ENCODE measurements at regions of chr1 and their contacts with region 1.

Region 1: DNA sequence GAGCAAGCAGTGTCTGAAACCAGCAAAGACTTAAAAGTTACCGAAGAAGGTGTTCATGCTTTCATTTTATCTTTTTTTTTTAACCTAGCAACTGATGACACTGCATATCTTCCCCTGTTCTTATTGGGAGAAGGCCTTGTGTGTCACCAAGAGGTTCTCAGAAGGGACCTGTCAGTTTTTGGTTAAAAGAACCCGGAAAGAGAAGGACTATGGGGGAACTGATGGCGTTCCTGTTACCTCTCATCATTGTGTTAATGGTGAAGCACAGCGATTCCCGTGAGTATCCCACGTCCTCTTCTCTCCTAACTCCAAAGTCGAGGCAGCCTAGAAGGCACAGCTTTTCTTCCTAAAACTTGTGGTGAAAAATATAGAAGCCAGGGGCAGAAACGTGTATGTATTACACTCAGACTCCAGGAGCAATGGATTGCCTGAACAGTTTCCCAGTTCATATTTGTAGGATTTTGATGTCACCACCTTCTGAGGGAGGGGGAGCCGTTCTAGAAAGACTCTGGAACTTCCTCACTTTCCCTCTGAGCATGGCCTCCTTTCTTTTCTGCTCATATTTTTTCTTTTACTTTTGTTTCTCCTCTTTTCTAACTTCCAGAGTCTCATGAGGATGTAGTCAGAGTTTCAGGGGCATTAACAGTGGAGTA is at the start of gene MR1:
- DNase-seq: no peak
- H3K4me3 ChIP-seq: peak within 1 kb of the TSS; percentile 41
- CTCF ChIP-seq: no peak

Region 2: GRCh38 chr1:181021811-181022434 is 12.0 kb before region 1 on chr1:
- CTCF ChIA-PET with region 1: interaction called, 9 read pairs
- POLR2A ChIA-PET with region 1: interaction called, 21 read pairs
- DNase-seq: no peak
- H3K4me3 ChIP-seq: peak overlapping the region; percentile 83
- CTCF ChIP-seq: no peak

Region 3: GRCh38 chr1:181044449-181044966 is 10.6 kb after region 1 on chr1:
- CTCF ChIA-PET with region 1: interaction called, 12 read pairs
- POLR2A ChIA-PET with region 1: interaction called, 3 read pairs
- DNase-seq: no peak
- H3K4me3 ChIP-seq: no peak overlapping the region
- CTCF ChIP-seq: no peak

Region 4: GRCh38 chr1:181062836-181063428 is 29.0 kb after region 1 on chr1:
- CTCF ChIA-PET with region 1: interaction called, 12 read pairs
- POLR2A ChIA-PET with region 1: no interaction called
- DNase-seq: peak; percentile 41
- H3K4me3 ChIP-seq: no peak overlapping the region
- CTCF ChIP-seq: no peak

Region 5: GRCh38 chr1:181088079-181089016 is 54.4 kb after region 1 on chr1 and contains the start of gene IER5:
- CTCF ChIA-PET with region 1: interaction called, 11 read pairs
- POLR2A ChIA-PET with region 1: interaction called, 8 read pairs
- DNase-seq: peak; percentile 72
- H3K4me3 ChIP-seq: peak within 1 kb of the TSS; percentile 90
- CTCF ChIP-seq: no peak

Region 6: DNA sequence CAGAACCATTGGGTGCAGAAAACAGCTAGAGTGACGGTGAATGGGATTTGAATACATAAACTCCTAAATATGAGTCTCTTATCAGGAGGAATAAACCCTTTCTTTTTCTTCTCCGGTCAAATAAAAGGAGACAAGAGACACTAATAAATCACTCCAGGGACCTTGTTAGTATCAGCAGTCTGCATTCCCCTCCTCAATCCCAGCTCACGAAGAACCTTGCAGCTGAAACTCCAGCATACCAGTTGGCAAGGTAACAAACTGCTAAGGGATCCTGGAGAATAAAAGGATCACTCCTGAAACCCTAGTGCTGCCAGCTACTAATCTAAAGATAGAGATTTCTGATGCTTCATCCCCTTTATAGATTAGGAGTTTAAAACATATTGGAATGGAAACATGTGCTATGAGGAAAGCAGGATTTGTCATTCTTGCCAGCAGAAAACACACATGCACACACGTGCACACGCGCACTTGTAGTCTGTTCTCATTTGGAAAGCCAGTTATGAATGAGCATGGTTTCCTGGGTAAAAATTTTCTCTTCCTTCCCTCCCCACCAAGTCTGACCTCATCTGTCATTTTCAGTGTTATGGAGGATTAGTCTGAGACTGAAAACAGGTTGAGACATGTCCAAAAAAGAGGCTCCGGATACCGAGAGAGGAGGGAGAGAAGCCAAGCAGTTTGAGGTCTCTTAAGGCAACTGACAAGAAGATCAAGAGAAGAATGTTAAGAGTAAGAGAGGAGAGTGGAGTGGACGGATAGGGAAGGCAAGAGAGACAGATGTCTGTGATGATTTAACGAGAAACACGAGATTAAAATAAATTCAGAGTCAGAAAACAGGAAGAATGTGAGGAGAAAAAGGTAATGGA is 65.5 kb after region 1 on chr1:
- CTCF ChIA-PET with region 1: interaction called, 16 read pairs
- POLR2A ChIA-PET with region 1: no interaction called
- DNase-seq: no peak
- H3K4me3 ChIP-seq: no peak overlapping the region
- CTCF ChIP-seq: no peak

Region 7: GRCh38 chr1:181166377-181167196 is 132.7 kb after region 1 on chr1:
- CTCF ChIA-PET with region 1: interaction called, 24 read pairs
- POLR2A ChIA-PET with region 1: no interaction called
- DNase-seq: peak; percentile 12
- H3K4me3 ChIP-seq: no peak overlapping the region
- CTCF ChIP-seq: peak; percentile 78